Breast epithelium (tissue), 4 donors: ENCODE measurements at regions of chr21 and their contacts with region 1.

Region 1: DNA sequence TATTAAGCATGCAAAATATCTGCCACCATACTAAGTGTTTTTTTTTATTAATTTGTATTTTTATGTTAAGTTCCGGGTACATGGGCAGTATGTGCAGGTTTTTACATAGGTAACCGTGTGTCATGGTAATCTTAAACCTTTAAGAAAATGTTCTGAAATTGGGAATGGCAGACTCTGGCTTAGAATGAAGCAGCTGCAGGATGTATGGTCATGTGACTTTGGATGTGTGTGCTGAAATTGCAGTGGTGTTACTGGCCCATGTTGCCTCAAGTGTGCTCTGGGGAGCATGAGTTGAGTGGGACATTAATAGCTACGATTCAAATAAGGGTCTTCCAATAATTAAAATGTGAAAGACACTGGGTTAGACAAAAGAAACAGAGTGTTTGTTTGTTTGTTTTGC is 6.7 kb downstream of the GRIK1 start:
- DNase-seq: no peak
- H3K4me3 ChIP-seq: no peak overlapping the region
- H3K27ac ChIP-seq: no peak overlapping the region
- H3K4me1 ChIP-seq: no peaks in the 10 kb centered on the region
- H3K27me3 ChIP-seq: peaks cover 0 to 4% of the 10 kb centered on the region in 2 donors
- CTCF ChIP-seq: no peak
- POLR2A ChIP-seq: no peak

Region 2: DNA sequence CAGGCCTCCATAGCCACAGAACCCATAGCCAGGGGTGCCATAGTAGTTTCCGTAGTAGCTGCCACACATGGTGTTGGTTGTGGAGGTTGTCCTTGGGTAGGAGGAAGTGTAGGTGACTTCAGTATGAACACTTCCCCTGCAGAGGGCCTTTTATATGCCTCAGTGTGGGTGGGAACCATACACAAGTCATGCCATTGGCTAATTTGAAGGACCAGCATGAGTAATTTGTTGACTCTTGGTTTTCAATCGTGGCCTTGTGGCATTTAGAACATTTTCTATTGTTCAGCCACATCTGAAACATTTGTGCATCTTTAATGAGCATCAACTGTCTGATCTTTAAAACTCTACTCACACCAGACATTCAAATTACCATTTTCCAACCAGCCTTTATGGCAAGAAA is 680.7 kb after region 1 on chr21 and contains the start of gene KRTAP6-1:
- intact Hi-C with region 1: loop called (anchors 5 kb)
- DNase-seq: no peak
- H3K4me3 ChIP-seq: no peak within 1 kb of the TSS
- H3K27ac ChIP-seq: no peak within 1 kb of the TSS
- H3K4me1 ChIP-seq: no peaks in the 10 kb centered on the region
- H3K27me3 ChIP-seq: no peaks in the 10 kb centered on the region
- CTCF ChIP-seq: no peak
- POLR2A ChIP-seq: no peak
- total RNA-seq, gene KRTAP6-1: not detected